ENCODE measurements at regions of chr3 and their contacts with region 1.

Region 1: DNA sequence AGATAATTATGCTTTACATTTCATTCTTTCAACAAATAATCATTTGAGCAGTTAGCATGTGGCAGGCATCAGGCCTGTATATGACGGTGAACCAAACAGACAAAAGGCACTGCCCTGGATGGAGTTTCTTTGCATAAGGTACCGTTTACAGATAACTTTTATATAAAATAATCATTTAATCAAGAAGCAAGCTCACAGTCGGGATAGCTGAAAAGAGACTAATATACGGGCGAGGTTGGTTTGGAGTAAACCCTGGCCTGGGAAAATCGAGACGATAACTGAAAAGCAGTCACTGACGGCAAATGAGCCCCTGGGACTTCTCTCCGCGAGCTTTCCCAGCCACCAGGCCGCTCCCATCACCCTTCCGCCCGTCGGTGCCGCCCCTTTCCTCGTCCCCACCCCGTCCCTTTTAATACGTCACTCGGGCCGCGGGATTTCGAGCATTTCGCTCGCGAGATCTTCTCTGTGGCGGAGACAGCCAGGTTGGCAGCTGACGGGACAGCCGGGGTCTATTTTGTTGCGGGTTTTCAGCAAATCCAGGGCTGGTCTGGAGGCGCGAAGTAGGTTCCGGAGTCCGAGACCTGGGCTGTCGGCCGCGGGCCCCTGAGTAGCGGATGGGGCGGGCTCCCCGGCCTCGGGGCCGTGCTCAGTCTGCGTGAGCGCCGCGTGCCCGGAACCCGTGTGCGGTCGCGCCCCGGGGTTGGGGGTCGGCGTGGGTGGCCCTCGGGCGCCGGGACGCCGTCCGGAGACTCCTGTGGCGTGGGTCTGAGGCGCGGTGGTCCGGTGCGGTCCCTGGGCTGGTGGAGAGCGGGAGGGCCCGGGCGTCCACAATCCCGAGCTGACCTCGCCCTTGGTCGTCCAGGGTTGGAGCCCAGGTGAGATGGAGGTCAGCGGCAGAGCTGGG is at the start of gene NMD3:
- DNase-seq: peak; percentile 94
- H3K4me3 ChIP-seq: peak within 1 kb of the TSS; percentile 94
- H3K27ac ChIP-seq: peak within 1 kb of the TSS; percentile 52
- H3K4me1 ChIP-seq: peaks cover 20% of the 10 kb centered on the region
- CTCF ChIP-seq: no peak
- total RNA-seq, gene NMD3: 30.0 and 36.1 TPM in 2 replicates

Region 2: GRCh38 chr3:160565442-160566403 is 655.4 kb before region 1 on chr3 and contains the start of gene KPNA4:
- CTCF ChIA-PET with region 1: no interaction called
- POLR2A ChIA-PET with region 1: interaction called, 4 read pairs
- intact Hi-C with region 1: loop called (anchors 2 kb)
- DNase-seq: peak; percentile 97
- H3K4me3 ChIP-seq: peak within 1 kb of the TSS; percentile 97
- H3K27ac ChIP-seq: peak within 1 kb of the TSS; percentile 77
- H3K4me1 ChIP-seq: peaks cover 42% of the 10 kb centered on the region
- CTCF ChIP-seq: no peak
- total RNA-seq, gene KPNA4: 12.4 and 15.7 TPM in 2 replicates

Region 3: GRCh38 chr3:161069511-161070263 is 151.4 kb before region 1 on chr3:
- CTCF ChIA-PET with region 1: no interaction called
- POLR2A ChIA-PET with region 1: interaction called, 3 read pairs
- intact Hi-C with region 1: loop called (anchors 1 kb)
- DNase-seq: peak; percentile 87
- H3K4me3 ChIP-seq: peak overlapping the region; percentile 49
- H3K27ac ChIP-seq: peak overlapping the region; percentile 93
- H3K4me1 ChIP-seq: peaks cover 66% of the 10 kb centered on the region
- CTCF ChIP-seq: no peak

Region 4: DNA sequence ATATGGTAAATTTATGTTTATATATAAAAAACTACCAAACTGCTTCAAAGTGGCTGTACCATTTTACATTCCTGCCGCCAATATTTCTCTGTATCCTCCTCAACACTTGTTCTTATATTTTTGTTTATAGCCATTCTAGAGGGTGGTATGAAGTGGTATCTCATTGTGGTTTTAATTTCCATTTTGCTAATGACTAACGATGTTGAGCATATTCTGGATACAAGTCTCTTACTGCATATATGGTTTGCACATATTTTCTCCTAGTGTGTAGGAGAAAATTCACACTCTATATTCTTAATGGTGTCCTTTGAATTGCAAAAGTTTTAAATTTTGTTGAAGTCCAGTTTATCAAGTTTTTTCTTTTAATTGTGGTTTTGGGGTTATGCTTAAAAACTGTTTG is 15.1 kb after region 1 on chr3:
- CTCF ChIA-PET with region 1: interaction called, 3 read pairs
- POLR2A ChIA-PET with region 1: interaction called, 13 read pairs
- intact Hi-C with region 1: no loop called
- DNase-seq: no peak
- H3K4me3 ChIP-seq: no peak overlapping the region
- H3K27ac ChIP-seq: no peak overlapping the region
- H3K4me1 ChIP-seq: no peaks in the 10 kb centered on the region
- CTCF ChIP-seq: no peak